ENCODE measurements at regions of chr1 and their contacts with region 1.

Region 1: DNA sequence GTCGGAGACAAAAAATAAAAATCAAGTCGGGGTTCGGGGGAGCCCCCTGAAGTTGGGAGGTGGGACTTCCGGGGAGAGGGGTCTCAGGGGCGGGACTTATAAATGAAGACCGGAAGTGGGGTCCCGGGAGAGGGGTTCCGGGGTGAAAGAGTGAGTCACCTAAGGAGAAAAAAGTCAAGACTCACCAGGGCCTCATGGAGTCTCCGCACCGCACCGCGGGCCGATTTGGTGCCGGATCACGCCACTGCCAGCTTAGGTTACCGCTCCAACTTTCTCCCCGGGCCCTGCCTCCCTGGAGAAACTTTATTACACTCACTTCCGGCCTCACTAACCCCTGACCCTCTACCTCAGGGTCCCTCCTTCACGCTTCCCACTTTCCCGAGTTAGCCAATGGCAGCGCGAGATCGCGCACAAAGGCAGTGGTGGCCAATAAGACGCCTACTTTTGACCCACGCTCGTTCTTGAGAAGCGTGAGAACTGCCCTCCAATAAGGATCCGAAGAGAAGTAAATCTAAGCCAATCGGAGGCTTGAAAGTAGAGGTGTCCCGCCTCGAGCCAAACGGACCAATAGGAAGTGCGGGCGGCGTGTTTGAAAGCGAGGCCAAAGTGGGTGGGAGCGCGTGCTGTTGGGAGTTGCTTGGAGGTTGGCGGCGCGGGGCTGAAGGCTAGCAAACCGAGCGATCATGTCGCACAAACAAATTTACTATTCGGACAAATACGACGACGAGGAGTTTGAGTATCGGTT is at the start of gene CKS1B:
- DNase-seq: peak; percentile 92
- ATAC-seq: peak; percentile 89
- H3K4me3 Mint-ChIP-seq: no peak within 1 kb of the TSS
- H3K27ac Mint-ChIP-seq: no peak within 1 kb of the TSS
- H3K4me1 Mint-ChIP-seq: peaks cover 37% of the 10 kb centered on the region
- H3K27me3 Mint-ChIP-seq: no peaks in the 10 kb centered on the region
- total RNA-seq, gene CKS1B: 112 to 114 TPM

Region 2: GRCh38 chr1:154955718-154956543 is 18.3 kb before region 1 on chr1 and contains the start of gene PBXIP1:
- POLR2A ChIA-PET with region 1: interaction called, 43 read pairs
- DNase-seq: peak; percentile 69
- ATAC-seq: peak; percentile 48
- H3K4me3 Mint-ChIP-seq: peak within 1 kb of the TSS; percentile 97
- H3K27ac Mint-ChIP-seq: peak within 1 kb of the TSS; percentile 99
- H3K4me1 Mint-ChIP-seq: peaks cover 60% of the 10 kb centered on the region
- H3K27me3 Mint-ChIP-seq: no peaks in the 10 kb centered on the region
- total RNA-seq, gene PBXIP1: 149 to 155 TPM

Region 3: DNA sequence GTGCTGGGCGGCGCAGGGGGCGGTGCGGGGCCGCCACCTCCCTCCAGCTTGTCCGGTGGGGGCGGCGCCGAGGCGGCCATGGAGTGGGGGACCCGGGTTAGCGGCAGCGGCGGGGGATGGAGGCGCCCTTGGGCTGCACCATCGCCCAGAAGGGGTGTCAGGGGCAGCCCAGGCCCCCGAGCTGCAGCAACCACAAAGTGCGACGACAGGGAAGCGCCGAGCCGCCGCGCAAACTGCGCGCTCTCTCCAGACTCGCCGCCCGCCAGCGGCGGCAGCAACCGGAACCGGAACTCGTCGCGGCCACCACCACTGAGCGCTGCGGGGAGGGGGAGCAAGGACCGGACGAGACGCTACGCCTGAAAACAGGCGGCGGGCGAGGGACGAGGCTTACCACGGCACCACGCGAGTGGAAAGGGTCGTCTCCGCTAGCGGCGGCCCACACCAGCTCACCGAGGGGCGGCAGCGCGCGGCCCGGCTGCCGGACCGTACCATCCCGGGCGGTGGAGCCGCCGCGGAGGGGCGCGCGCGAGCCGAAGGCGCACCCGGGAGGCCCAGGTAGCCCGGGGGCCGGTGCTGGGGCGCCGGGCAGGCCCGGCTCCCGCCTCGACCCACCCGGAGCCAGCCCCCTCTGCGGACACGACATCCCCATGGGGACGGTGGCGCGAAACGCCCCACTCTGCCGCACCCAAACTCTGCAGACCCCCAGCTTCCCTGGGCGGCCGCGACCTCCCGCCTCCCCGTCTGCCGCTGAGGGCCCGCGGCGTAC is 12.6 kb before region 1 on chr1 and contains the start of gene PYGO2:
- POLR2A ChIA-PET with region 1: interaction called, 43 read pairs
- DNase-seq: peak; percentile 90
- ATAC-seq: peak; percentile 80
- H3K4me3 Mint-ChIP-seq: peak within 1 kb of the TSS; percentile 94
- H3K27ac Mint-ChIP-seq: peak within 1 kb of the TSS; percentile 90
- H3K4me1 Mint-ChIP-seq: peaks cover 24% of the 10 kb centered on the region
- H3K27me3 Mint-ChIP-seq: no peaks in the 10 kb centered on the region
- total RNA-seq, gene PYGO2: 55.3 TPM

Region 4: DNA sequence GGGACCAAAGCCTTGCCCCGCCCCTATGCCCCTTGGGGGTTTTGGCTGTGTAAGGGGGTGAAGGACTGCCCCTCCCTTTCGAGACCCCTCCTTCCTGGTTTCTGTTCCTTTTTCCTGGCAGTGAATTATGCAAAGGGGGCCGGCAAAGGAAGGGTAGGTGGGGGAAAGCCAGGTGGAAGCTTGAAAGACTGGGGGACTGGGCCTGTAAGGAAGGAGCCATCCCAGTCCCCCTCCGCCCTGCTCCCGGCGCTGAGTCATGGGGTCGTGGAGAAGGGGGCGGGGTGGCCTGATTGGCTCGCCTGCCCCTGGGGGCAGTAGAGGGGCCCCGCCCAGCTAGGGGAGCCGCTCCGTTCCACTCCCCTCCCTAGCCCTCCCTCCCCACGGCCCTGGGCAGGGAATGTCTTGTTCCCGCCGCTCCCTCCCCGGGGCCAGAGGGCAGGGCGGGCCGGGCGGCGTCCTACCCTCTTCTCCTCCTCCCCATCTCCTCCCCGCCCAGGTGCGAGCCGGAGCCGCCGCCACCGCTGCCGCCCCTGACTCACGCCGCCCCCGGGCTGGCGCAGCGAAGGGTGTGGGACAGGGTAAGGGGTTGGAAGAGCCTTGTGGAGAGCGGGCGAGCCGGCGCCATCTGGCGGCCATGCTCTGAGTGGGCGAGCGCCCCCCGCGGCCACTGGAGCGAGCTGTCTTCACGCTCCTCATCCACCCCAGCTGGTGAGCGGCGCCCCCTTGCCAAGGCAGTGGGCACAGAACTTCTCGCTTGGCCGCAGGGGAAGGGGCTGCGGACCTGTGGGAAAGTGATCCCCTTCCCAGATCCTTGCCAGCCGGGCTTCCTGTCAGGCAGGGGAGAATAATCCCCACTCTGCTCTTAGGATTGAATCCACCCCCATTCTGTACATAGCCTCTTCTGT is 43.1 kb after region 1 on chr1:
- POLR2A ChIA-PET with region 1: interaction called, 18 read pairs
- DNase-seq: peak; percentile 92
- ATAC-seq: peak; percentile 98
- H3K4me3 Mint-ChIP-seq: peak overlapping the region; percentile 74
- H3K27ac Mint-ChIP-seq: peak overlapping the region; percentile 70
- H3K4me1 Mint-ChIP-seq: peaks cover 42% of the 10 kb centered on the region
- H3K27me3 Mint-ChIP-seq: peaks cover 5% of the 10 kb centered on the region

Measured in activated naive CD8-positive, alpha-beta T cell treated with anti-CD3 and anti-CD28 coated beads, Interleukin-2, amount 10 ng/mL, durations not matched to agents 7 days and 5 days (primary cell).